ENCODE measurements at regions of chr14 and their contacts with region 1.

Region 1: DNA sequence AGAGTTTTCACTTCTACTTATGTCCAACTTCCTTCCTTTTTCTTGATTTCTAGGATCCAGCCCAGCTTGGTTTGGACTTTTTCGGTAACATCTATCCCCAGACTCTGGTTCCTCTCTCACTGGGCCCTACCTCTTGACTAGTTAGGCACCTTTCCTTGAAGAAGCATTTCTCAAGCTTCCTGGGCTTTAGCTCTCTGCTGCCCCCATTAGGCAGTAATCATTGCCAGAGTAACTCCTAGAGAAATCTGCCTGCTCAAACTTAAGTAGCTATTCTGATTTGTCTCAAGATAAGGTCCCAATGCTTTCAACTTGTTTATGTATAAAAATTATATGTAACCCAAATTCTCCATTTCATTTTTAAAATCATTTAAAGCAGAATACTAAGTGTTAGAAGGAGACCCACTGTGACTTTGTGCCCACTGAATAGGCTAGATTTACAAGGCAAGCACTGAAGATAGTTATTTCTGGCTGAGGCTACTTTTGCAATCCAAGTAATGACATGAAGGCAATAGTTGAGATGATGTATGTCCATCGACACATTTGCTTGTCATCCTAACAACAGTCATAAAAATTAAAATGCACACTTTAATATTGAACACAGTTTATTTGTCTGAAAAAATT is 275.0 kb upstream of the G2E3 start:
- DNase-seq: no peak
- H3K4me3 Mint-ChIP-seq: no peak overlapping the region
- H3K27ac Mint-ChIP-seq: no peak overlapping the region
- H3K4me1 Mint-ChIP-seq: peaks cover 2% of the 10 kb centered on the region
- H3K27me3 Mint-ChIP-seq: no peaks in the 10 kb centered on the region

Region 2: GRCh38 chr14:30330445-30330844 is 46.5 kb after region 1 on chr14:
- intact Hi-C with region 1: loop called (anchors 10 kb)
- DNase-seq: no peak
- H3K4me3 Mint-ChIP-seq: no peak overlapping the region
- H3K27ac Mint-ChIP-seq: no peak overlapping the region
- H3K4me1 Mint-ChIP-seq: peaks cover 18% of the 10 kb centered on the region
- H3K27me3 Mint-ChIP-seq: no peaks in the 10 kb centered on the region